ENCODE measurements at regions of chr2 and their contacts with region 1.

Region 1: DNA sequence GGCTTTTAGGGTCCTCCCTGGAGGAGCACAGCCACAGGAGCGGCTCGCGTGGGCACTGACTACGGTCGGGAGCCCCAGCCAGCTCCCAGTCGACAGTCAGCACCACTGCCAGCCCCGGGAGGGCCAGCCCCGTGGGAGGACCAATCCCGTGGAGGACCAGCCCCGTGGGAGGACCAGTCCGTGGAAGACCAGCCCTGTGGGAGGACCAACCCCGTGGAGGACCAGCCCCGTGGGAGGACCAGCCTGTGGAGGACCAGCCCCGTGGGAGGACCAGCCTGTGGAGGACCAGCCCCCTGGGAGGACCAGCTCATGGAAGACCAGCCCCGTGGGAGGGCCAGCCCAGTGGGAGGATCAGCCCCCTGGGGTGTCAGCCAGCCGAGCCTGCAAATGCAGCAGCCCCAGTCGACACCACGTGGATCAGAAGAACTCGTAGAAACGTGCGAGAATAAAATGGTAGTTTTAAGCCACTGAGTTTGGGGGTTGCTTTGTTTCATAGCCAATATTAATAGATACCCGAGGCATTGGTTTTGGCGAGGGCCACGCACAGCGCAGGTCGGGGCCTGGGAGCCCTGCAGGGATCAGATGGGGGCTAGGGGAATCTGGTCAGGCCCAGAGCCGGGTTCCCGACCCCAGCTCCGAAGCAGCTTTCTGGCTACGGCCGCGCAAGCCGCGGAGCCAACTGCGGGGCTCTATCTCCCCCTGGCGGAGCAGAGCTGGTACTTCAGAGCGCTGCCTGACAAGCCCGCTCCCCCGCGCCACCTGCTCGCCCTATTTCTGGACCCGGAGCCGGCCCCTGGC is 73.0 kb downstream of the TEX51 start:
- DNase-seq: peak; percentile 69 to 98 (median 80)

Region 2: DNA sequence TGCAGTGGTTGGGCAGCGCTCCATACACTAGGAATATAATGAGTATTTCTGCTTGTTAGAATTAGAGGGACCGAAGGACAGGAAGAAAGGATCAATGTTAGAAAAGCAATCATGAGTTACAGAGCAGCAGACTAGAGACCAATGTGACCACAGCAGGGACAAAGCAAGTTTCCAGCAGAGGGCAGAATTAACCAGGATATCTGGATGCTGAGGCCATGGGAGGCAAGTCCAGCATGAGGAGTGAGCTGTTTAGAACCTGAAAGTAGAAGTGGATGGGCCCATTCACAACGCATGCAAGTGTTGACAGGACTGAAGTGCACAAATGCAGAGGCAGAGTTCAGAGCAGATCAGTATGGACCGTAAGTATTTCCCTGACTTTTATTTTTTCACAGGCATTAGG is 1226.2 kb before region 1 on chr2:
- intact Hi-C with region 1: loop called (anchors 5 kb)
- DNase-seq: peak in 7 of 10 donors; percentile 11 to 92 (median 56)

Region 3: GRCh38 chr2:126776692-126777619 is 194.7 kb before region 1 on chr2:
- intact Hi-C with region 1: loop called (anchors 5 kb)
- DNase-seq: peak; percentile 80 to 98 (median 90)

Region 4: GRCh38 chr2:126995621-126996377 is 24.1 kb after region 1 on chr2:
- intact Hi-C with region 1: no loop called
- DNase-seq: peak in 1 of 10 donors; percentile 24

Region 5: GRCh38 chr2:127064642-127065250 is 93.1 kb after region 1 on chr2:
- intact Hi-C with region 1: no loop called
- DNase-seq: peak in 5 of 10 donors; percentile 55 to 93 (median 88)

Measured in posterior cingulate gyrus (tissue), 11 donors.